ENCODE measurements at regions of chr5 and their contacts with region 1.

Region 1: GRCh38 chr5:53001541-53001940 is 12.4 kb downstream of the ITGA2 start:
- DNase-seq: no peak
- ATAC-seq: no peak
- H3K4me3 ChIP-seq: no peak overlapping the region
- H3K27ac ChIP-seq: no peak overlapping the region
- H3K4me1 ChIP-seq: peaks cover 0 to 9% (median 0%) of the 10 kb centered on the region in 9 donors
- H3K27me3 ChIP-seq: no peaks in the 10 kb centered on the region
- CTCF ChIP-seq: no peak

Region 2: GRCh38 chr5:53035868-53036381 is 34.4 kb after region 1 on chr5:
- intact Hi-C with region 1: loop called in 1 of 10 experiments (anchors 5 kb)
- DNase-seq: no peak
- ATAC-seq: no peak
- H3K4me3 ChIP-seq: no peak overlapping the region
- H3K27ac ChIP-seq: peak overlapping the region in 1 of 10 donors; percentile 35
- H3K4me1 ChIP-seq: peaks cover 2 to 44% (median 20%) of the 10 kb centered on the region in 9 donors
- H3K27me3 ChIP-seq: no peaks in the 10 kb centered on the region
- CTCF ChIP-seq: peak in 4 of 9 donors; percentile 5 to 25 (median 14)

Measured in heart right ventricle (tissue), 16 donors.